GM10248 (cell line): ENCODE measurements at regions of chr14 and their contacts with region 1.

Region 1: GRCh38 chr14:49862089-49862673 is 9.6 kb upstream of the NEMF start:
- DNase-seq: peak; percentile 59
- CTCF ChIP-seq: peak; percentile 100

Region 2: DNA sequence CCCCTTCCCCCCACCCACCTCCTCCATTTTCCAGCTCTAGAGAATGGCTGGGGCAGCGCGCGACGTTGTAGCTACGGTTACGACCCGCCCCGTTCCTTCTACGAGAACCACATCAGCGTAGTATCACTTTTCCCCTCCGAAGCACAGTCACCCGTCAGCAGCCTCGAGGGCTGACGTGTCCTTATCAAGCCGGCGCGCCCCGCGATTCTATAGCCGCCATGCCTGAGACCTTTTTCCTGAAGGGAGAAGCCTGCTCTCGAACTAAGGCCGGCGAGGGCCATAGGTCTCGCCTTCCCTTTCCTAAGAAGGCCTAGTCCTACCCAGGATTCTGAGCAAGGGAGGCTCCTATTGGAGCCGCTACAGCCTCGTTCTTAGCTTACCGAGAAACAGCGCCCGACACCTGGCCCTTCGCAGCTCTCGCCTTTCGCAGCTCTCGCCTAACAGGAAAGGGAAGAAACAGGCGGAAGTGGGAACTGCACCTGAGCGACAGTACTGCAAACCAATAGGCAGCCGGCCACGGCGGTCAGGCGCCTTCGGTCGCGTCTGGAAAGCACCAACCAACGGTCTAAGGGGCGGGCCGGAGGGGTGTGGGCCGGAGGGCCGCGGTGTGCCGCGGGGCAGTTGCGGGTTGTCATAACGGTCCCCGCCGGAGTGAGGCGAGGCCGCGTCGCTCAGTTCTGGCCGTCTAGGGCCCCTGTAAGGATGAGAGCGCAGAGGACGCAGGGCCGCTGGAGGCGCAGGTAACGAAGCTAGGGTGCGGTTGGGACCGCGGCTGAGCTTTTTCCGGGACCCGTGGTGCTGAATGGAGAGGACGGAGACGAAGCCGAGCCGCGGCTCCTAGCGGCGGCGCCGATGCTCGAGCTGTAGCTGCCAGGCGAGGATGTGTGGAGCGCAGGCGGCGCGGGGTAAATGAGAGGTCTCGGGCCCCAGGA is 241.7 kb before region 1 on chr14 and contains the starts of genes MGAT2 and RPL36AL:
- CTCF ChIA-PET with region 1: interaction called, 12 read pairs
- POLR2A ChIA-PET with region 1: no interaction called
- DNase-seq: peak; percentile 97
- CTCF ChIP-seq: peak; percentile 17

Region 3: DNA sequence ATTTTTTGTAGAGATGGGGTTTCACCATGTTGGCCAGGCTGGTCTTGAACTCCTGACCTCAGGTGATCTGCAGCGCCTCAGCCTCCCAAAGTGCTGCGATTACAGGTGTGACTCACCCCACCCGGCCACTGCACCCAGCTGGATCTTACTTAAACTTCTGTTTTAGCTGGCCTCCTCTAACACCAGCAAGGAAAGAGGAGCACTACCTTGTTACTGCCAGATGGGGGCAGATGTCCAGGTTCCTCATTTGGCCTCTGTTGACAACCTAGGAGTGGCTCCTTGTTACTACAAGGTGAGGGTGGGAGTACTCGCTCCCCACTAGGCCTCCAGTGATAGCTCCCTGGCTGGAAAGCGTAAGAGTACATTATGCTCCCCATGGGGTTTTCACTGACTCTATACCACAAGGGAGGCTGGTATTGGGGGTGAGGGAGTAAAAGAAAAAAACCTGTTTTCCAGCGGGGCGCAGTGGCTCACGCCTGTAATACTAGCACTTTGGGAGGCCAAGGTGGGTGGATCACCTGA is 17.6 kb after region 1 on chr14:
- CTCF ChIA-PET with region 1: interaction called, 38 read pairs
- POLR2A ChIA-PET with region 1: no interaction called
- DNase-seq: peak; percentile 69
- CTCF ChIP-seq: peak; percentile 58

Region 4: DNA sequence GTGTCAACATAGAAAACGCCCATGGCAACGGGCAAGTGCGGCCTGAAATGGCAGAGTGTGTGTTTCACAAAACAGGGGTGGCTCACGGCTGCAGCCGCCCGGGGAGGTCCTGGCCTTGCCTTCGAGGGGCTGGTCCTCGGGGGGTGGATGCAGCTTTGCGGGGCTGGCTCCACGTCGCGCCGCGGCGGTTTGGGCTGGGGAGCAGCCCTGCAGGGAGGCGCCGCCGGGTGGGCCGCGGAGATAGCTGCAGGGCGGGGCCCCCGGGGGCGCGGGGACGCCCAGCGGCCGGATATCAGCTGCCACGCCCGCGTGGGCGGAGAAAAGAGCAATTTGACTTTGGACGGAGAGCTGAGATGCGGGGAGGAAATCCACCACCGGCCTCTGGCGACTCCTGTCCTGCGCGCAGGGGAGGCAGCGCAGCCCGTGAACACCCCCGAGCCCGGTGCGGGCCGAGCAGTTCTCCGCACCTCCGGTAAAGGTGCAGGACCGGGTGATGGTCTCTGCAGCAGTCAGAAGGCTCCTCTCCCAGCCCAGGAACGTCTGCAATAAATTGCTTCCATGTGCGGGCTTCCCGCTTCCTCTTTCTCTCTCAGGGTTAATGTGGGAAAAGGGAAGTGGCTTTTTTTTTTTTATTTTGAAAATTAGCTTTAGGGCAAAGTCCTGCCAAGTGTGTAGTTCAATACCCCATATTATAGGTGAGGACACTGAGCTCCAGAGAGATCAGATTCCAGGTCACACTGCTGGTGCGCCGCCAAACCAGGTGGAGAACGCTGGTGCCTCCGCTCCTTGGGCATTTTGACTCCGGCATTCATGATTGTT is 141.2 kb after region 1 on chr14:
- CTCF ChIA-PET with region 1: interaction called, 13 read pairs
- POLR2A ChIA-PET with region 1: interaction called, 3 read pairs
- DNase-seq: peak; percentile 90
- CTCF ChIP-seq: peak; percentile 15

Region 5: GRCh38 chr14:50038398-50039119 is 176.4 kb after region 1 on chr14:
- CTCF ChIA-PET with region 1: interaction called, 9 read pairs
- POLR2A ChIA-PET with region 1: interaction called, 10 read pairs
- DNase-seq: peak; percentile 81
- CTCF ChIP-seq: no peak

Region 6: GRCh38 chr14:50085570-50086320 is 223.6 kb after region 1 on chr14:
- CTCF ChIA-PET with region 1: interaction called, 27 read pairs
- POLR2A ChIA-PET with region 1: no interaction called
- DNase-seq: peak; percentile 69
- CTCF ChIP-seq: no peak